ENCODE measurements at regions of chr1 and their contacts with region 1.

Region 1: DNA sequence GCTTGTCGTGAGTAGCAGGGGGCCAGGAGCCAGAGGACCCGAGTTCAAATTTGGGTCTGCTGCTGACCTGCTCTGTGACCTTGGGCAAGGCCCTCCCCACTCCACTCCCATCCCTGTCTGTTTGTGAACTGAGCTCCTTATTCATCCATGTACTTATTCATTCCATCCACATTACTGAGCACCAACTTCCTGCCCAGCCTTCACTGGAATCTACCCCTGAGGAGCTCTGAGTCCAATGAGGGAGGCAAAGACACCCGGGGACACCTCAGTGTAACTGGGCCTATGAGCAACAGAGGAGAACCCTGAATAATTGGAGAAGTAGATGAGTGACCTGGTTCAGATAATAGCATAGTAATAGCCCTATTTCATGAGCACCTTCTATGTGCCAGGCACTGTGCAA is 8.9 kb downstream of the BSND start:
- DNase-seq: peak; percentile 56
- H3K4me3 ChIP-seq: no peak overlapping the region
- CTCF ChIP-seq: no peak

Region 2: DNA sequence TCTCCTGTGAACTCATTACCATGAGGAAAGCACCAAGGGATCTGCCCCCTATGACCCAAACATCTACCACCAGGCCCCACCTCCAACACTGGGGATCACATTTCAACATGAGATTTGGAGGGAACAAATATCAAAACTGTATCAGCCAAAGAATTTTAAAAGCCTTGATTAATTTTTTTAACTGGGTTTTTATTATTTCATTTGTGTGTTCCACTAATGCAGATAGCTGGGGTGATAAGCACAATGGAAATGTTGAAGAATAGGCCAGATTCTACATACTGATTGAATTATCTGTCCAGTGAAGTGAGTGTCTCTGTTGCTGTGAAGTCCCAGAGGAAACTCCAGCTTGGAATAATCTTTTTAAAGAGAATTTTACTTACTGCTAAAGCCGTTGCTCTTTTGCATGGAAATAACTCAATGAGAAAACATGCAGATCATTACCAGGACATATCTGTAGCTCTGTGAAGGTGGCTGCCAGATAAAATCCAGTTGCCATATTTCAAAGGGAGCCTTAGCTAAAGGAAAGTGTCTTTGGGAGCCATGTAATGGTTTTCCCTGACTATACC is 76.3 kb before region 1 on chr1:
- CTCF ChIA-PET with region 1: no interaction called
- POLR2A ChIA-PET with region 1: no interaction called
- DNase-seq: no peak
- H3K4me3 ChIP-seq: no peak overlapping the region
- CTCF ChIP-seq: no peak

Region 3: GRCh38 chr1:54973205-54973921 is 34.3 kb before region 1 on chr1:
- CTCF ChIA-PET with region 1: interaction called, 10 read pairs
- POLR2A ChIA-PET with region 1: interaction called, 3 read pairs
- DNase-seq: no peak
- H3K4me3 ChIP-seq: no peak overlapping the region
- CTCF ChIP-seq: peak; percentile 53

Region 4: DNA sequence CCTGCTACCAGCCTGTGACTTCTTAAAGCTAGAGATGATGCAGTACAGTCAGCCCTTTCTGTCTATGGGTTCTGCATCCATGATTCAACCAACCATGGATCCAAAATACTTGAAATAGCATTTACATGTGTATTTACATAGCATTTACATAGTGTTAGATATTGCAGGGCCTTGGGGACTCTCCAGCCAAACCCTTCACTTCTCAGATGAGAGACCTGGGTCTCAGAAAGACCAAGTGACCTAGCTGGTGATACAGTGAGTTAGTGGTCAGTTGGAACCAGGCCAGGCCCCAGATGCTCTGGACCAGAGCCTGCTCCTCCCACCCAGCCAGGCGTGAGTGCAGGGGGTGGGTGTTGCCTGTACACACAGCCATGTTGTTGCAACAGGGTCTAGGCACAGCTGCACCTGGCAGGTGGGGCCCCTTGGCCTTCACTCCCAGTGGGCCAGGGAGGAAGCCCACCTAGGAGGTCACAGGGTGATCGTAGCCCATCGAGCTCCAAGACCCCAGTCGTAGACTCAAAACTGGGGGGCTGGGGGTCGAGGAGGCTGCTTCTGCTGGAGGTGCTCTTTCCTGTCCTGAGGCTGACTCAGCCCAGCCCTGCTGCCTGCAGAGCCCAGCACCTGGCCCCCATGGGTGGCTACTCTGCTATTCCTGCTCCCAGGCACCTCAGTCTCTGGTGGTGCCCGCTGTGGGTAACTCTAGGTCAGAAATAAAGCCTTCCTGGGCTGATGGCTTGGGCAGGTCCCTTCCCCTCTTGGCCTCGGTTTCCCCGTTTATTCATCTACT is 19.5 kb before region 1 on chr1:
- CTCF ChIA-PET with region 1: interaction called, 23 read pairs
- POLR2A ChIA-PET with region 1: no interaction called
- DNase-seq: peak; percentile 66
- H3K4me3 ChIP-seq: no peak overlapping the region
- CTCF ChIP-seq: no peak

Measured in AG04449 (cell line).